Natural killer cell (primary cell): ENCODE measurements at regions of chr3 and their contacts with region 1.

Region 1: DNA sequence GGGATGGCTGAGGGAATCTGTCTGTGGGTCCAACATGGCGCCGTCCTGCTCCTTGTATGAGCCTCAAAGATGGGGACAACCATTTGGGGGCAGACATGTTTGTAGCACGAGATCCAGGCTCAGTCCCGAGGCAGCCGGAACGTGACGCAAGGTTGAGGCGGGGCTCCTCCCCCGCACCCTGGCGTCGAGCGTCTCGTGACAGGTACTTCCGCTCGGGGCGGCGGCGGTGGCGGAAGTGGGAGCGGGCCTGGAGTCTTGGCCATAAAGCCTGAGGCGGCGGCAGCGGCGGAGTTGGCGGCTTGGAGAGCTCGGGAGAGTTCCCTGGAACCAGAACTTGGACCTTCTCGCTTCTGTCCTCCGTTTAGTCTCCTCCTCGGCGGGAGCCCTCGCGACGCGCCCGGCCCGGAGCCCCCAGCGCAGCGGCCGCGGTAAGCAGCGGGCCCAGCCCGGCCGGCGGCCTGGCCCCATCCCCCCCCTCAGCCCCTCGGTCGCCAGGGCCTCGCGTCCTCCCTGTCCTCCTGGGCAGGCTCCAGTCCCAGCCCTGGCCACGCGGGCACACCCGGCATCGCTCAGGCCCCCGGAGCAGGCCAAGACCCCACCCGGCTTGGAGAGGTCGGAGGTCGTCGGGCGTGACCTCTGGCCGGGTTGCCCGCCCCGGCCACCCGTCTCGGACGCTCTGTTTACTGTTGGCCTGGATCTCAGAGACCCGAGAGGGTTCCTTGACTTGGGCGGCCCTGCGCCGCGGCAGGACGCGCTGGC is at the start of gene RAB7A:
- DNase-seq: peak; percentile 96 to 99
- ATAC-seq: peak; percentile 90 to 97 (median 95)
- H3K4me3 ChIP-seq: peak within 1 kb of the TSS; percentile 83
- H3K4me3 Mint-ChIP-seq: peak within 1 kb of the TSS; percentile 99
- H3K27ac ChIP-seq: peak within 1 kb of the TSS; percentile 75
- H3K27ac Mint-ChIP-seq: peak within 1 kb of the TSS; percentile 95 to 98
- H3K4me1 ChIP-seq: peaks cover 26% of the 10 kb centered on the region
- H3K4me1 Mint-ChIP-seq: peaks cover 53 to 58% of the 10 kb centered on the region in 2 donors
- H3K27me3 ChIP-seq: no peaks in the 10 kb centered on the region
- H3K27me3 Mint-ChIP-seq: peaks cover 2 to 8% of the 10 kb centered on the region in 2 donors
- CTCF ChIP-seq: no peak
- total RNA-seq, gene RAB7A: 218 to 233 (median 224) TPM

Region 2: GRCh38 chr3:128697341-128697740 is 28.8 kb before region 1 on chr3:
- intact Hi-C with region 1: no loop called
- DNase-seq: no peak
- ATAC-seq: no peak
- H3K4me3 ChIP-seq: no peak overlapping the region
- H3K4me3 Mint-ChIP-seq: no peak overlapping the region
- H3K27ac ChIP-seq: no peak overlapping the region
- H3K27ac Mint-ChIP-seq: no peak overlapping the region
- H3K4me1 ChIP-seq: peaks cover 16% of the 10 kb centered on the region
- H3K4me1 Mint-ChIP-seq: peaks cover 0 to 9% of the 10 kb centered on the region in 2 donors
- H3K27me3 ChIP-seq: peaks cover 4% of the 10 kb centered on the region
- H3K27me3 Mint-ChIP-seq: no peaks in the 10 kb centered on the region
- CTCF ChIP-seq: no peak

Region 3: DNA sequence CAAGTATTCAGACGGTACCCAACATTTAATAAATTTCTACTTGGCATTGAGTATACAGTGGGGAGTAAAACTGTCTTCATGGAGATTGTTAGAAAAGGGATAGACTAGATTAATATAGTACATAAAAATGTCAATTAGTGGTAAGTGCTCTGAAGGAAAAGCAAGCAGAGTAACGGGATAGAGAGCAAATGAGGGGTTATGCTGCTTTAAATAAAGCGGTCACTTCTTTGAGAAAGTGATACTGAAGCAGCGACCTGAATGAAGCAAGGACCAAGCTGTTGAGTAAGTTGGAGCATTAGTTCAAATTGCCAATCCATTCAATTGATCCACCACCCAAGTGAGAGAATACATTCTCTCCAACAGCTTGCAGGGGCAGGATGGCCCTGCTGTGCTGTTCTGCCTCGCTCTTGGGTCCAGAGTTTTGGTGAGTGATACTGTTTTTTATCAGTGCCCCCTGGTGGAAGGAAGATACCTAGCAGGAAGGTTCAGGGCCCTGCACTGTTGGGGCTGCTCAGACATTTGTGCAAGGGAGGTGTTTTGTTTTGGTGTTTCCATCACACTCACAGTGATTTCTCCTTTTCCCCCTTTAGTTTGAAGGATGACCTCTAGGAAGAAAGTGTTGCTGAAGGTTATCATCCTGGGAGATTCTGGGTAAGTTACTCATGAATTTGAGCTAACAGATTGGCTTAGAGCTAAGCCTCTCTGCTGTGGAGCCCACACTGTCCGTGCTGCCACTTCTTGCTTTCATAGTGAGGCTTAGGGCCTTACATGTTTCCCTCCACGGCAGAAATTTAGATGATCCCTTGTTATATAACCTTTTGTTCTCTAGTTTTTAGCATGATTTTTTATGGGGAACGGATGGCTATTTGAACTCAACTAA is 68.9 kb after region 1 on chr3:
- intact Hi-C with region 1: loop called (anchors 1 kb)
- DNase-seq: peak; percentile 47 to 87
- ATAC-seq: peak; percentile 98 to 100 (median 99)
- H3K4me3 ChIP-seq: no peak overlapping the region
- H3K4me3 Mint-ChIP-seq: no peak overlapping the region
- H3K27ac ChIP-seq: no peak overlapping the region
- H3K27ac Mint-ChIP-seq: peak overlapping the region; percentile 61 to 72
- H3K4me1 ChIP-seq: peaks cover 18% of the 10 kb centered on the region
- H3K4me1 Mint-ChIP-seq: peaks cover 22 to 45% of the 10 kb centered on the region in 2 donors
- H3K27me3 ChIP-seq: no peaks in the 10 kb centered on the region
- H3K27me3 Mint-ChIP-seq: no peaks in the 10 kb centered on the region
- CTCF ChIP-seq: peak; percentile 74